Naive thymus-derived CD4-positive, alpha-beta T cell (primary cell): ENCODE measurements at regions of chr9 and their contacts with region 1.

Region 1: DNA sequence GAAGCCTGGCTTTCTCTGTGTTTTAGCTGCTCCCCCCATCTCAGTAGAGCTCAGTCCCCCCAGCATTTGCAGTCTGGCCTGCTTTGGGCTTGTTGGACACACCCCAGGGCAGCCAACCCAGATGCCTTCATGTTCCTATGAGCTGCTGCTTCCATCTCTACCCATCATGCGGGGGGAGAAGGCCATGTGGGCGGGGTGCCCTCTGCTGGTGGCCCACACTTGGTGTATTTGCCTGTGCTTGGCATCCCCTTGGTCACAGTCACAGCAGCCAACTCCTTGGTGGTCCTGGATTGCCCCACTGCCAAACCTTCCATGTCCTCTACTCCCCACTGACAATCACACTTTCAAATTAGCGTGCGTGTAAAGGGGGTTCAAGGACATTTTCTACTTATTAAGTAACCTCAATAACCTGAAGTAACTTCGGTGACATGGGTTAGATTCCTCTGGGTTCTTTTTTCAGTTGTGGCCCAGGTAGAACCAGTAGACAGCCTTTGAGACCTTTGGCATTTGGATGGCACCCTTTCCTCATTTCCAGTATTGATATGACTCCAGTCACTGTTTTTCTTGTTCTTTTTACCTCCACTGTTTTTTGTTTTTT is 42.8 kb downstream of the SNX30 start:
- DNase-seq: peak; percentile 59 to 76 (median 72)
- ATAC-seq: peak; percentile 98
- H3K4me3 ChIP-seq: no peak overlapping the region
- H3K4me3 Mint-ChIP-seq: no peak overlapping the region
- H3K27ac ChIP-seq: no peak overlapping the region
- H3K27ac Mint-ChIP-seq: no peak overlapping the region
- H3K4me1 ChIP-seq: no peaks in the 10 kb centered on the region
- H3K4me1 Mint-ChIP-seq: peaks cover 0 to 19% (median 12%) of the 10 kb centered on the region in 7 donors
- H3K27me3 ChIP-seq: no peaks in the 10 kb centered on the region
- H3K27me3 Mint-ChIP-seq: no peaks in the 10 kb centered on the region

Region 2: GRCh38 chr9:112086627-112087026 is 706.7 kb before region 1 on chr9:
- CTCF ChIA-PET with region 1: interaction called, 3 read pairs
- POLR2A ChIA-PET with region 1: no interaction called
- intact Hi-C with region 1: loop called in 1 of 2 experiments (anchors 10 kb)
- DNase-seq: no peak
- ATAC-seq: no peak
- H3K4me3 ChIP-seq: no peak overlapping the region
- H3K4me3 Mint-ChIP-seq: no peak overlapping the region
- H3K27ac ChIP-seq: no peak overlapping the region
- H3K27ac Mint-ChIP-seq: no peak overlapping the region
- H3K4me1 ChIP-seq: no peaks in the 10 kb centered on the region
- H3K4me1 Mint-ChIP-seq: peaks cover 0 to 4% (median 0%) of the 10 kb centered on the region in 7 donors
- H3K27me3 ChIP-seq: no peaks in the 10 kb centered on the region
- H3K27me3 Mint-ChIP-seq: no peaks in the 10 kb centered on the region

Region 3: GRCh38 chr9:112361601-112362000 is 431.7 kb before region 1 on chr9:
- CTCF ChIA-PET with region 1: no interaction called
- POLR2A ChIA-PET with region 1: interaction called, 3 read pairs
- intact Hi-C with region 1: loop called in 1 of 2 experiments (anchors 1 kb)
- DNase-seq: peak in 7 of 9 donors; percentile 16 to 51 (median 40)
- ATAC-seq: peak; percentile 60
- H3K4me3 ChIP-seq: no peak overlapping the region
- H3K4me3 Mint-ChIP-seq: no peak overlapping the region
- H3K27ac ChIP-seq: no peak overlapping the region
- H3K27ac Mint-ChIP-seq: no peak overlapping the region
- H3K4me1 ChIP-seq: peaks cover 0 to 4% of the 10 kb centered on the region in 2 donors
- H3K4me1 Mint-ChIP-seq: peaks cover 0 to 4% (median 0%) of the 10 kb centered on the region in 7 donors
- H3K27me3 ChIP-seq: no peaks in the 10 kb centered on the region
- H3K27me3 Mint-ChIP-seq: peaks cover 0 to 22% (median 9%) of the 10 kb centered on the region in 5 donors

Region 4: DNA sequence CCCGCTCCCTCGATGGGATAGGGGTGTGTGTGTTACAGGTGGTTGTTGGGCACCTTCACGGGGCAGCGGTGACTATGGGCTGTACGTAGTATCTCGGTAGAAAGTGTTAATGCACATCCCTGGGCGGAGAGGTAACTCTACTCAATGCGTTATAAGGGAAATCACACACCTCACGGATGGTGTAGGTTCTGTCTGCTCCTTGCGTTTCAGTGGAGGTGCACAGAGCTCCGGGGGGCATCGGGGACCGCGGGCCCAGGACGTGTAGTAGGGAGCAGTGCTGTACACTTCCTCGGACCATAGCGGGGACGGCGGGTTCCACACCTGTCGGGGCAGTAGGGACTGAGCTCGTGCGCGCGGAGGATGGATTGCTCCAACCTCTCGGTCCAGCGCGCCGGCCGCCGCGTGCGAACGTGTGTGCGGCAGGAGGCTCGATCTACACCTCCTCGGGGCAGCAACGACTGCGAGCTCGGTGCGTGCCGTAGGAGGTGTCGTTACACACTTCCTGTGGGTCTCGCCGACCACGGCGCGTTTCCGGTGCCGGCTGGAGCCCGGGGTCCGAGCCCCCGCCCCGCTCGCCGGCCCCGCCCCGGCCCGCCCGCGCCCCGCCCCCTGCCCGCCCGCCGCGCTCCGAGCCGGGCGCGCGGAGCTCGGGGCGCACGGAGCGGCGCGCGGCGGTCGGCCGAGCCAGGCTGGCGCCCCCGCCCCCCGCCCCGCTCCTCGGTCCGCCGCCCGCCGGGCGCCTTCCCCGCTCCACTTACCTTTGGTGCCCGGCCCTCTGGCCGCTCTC is 306.9 kb before region 1 on chr9 and contains the start of gene KIAA1958:
- CTCF ChIA-PET with region 1: interaction called, 3 read pairs
- POLR2A ChIA-PET with region 1: no interaction called
- intact Hi-C with region 1: loop called in 1 of 2 experiments (anchors 5 kb)
- DNase-seq: peak; percentile 51 to 88 (median 73)
- ATAC-seq: peak; percentile 88
- H3K4me3 ChIP-seq: peak within 1 kb of the TSS; percentile 69
- H3K4me3 Mint-ChIP-seq: peak within 1 kb of the TSS; percentile 95 to 100 (median 98)
- H3K27ac ChIP-seq: peak within 1 kb of the TSS; percentile 72
- H3K27ac Mint-ChIP-seq: peak within 1 kb of the TSS; percentile 93 to 98 (median 97)
- H3K4me1 ChIP-seq: peaks cover 4 to 6% of the 10 kb centered on the region in 2 donors
- H3K4me1 Mint-ChIP-seq: peaks cover 19 to 64% (median 49%) of the 10 kb centered on the region in 7 donors
- H3K27me3 ChIP-seq: no peaks in the 10 kb centered on the region
- H3K27me3 Mint-ChIP-seq: peaks cover 0 to 6% (median 0%) of the 10 kb centered on the region in 5 donors
- total RNA-seq, gene KIAA1958: 6.2 to 8.3 (median 7.0) TPM

Region 5: DNA sequence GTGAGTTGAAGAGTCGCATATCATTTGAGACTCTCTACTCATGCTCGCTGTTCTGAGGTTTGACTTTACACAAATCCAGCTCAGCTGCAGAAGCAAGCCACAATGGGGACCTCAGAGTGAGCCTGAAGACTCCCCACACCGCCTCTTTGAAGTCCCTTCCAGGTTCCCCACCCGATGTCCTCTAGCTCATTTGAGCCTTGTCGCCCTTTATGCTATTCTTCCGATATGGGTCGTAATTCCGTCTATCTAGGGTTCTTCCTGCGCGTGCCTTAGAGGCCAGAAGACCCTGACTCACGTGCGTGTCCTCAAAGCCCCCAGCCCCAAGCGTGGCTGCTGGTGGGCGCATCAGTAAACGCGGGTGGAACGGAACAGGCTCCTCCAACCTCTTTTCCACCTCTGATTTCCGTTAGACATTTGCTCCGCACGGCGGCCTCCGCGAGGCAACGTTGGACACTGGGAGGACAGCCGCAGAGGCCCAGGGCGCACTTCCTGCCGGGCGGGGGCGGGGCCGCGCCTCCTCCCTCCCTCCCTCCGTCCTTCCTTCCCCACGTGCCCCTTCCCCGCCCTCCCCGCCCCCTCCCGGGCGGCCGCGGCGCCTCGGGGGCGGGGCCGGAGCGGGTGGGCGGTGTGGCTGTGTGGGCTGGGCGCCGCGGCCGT is 43.1 kb before region 1 on chr9 and contains the start of gene SNX30:
- CTCF ChIA-PET with region 1: interaction called, 5 read pairs
- POLR2A ChIA-PET with region 1: no interaction called
- intact Hi-C with region 1: loop called (anchors 1 kb)
- DNase-seq: peak; percentile 66 to 83 (median 75)
- ATAC-seq: peak; percentile 94
- H3K4me3 ChIP-seq: peak within 1 kb of the TSS; percentile 70
- H3K4me3 Mint-ChIP-seq: peak within 1 kb of the TSS; percentile 88 to 94 (median 92)
- H3K27ac ChIP-seq: peak within 1 kb of the TSS; percentile 68
- H3K27ac Mint-ChIP-seq: peak within 1 kb of the TSS; percentile 88 to 98 (median 96)
- H3K4me1 ChIP-seq: peaks cover 46% of the 10 kb centered on the region in 2 donors
- H3K4me1 Mint-ChIP-seq: peaks cover 39 to 66% (median 60%) of the 10 kb centered on the region in 7 donors
- H3K27me3 ChIP-seq: no peaks in the 10 kb centered on the region
- H3K27me3 Mint-ChIP-seq: peaks cover 0 to 4% (median 0%) of the 10 kb centered on the region in 5 donors
- total RNA-seq, gene SNX30: 6.6 to 15.8 (median 9.2) TPM

Region 6: DNA sequence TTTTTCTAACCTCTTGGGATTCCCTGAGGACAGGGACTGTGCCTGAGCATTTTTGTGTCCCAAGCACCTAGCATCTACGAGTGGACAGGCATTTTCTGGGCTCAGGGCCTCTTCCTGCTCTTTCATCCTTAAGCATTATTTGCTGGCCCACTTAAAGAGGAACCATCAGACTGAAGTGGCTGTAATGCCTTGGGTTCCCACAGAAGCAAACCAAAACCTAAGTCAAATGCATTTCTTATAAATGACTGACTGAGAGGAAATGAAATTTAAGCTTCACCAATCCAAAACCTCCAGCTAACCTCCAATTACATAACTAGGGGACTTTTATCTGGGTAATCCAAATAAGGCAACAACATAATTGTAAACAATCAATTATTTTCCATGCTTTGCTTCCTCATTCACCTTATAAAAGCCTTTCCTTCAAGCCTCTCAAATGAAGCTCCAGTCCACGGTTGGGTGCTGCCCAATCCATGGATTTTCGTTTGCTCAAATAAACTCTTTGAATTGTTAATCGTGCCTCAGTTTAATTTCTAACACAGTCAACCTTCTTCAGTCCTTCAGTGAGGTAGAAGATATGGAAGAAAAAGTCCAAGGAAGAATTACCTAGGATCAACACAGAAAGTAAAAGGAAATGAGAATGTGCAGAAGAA is 332.2 kb after region 1 on chr9:
- CTCF ChIA-PET with region 1: no interaction called
- POLR2A ChIA-PET with region 1: no interaction called
- intact Hi-C with region 1: no loop called
- DNase-seq: no peak
- ATAC-seq: no peak
- H3K4me3 ChIP-seq: no peak overlapping the region
- H3K4me3 Mint-ChIP-seq: no peak overlapping the region
- H3K27ac ChIP-seq: no peak overlapping the region
- H3K27ac Mint-ChIP-seq: no peak overlapping the region
- H3K4me1 ChIP-seq: no peaks in the 10 kb centered on the region
- H3K4me1 Mint-ChIP-seq: peaks cover 0 to 7% (median 0%) of the 10 kb centered on the region in 7 donors
- H3K27me3 ChIP-seq: no peaks in the 10 kb centered on the region
- H3K27me3 Mint-ChIP-seq: peaks cover 15 to 38% (median 33%) of the 10 kb centered on the region in 5 donors